PC-3 (cell line): ENCODE measurements at regions of chr2 and their contacts with region 1.

Region 1: DNA sequence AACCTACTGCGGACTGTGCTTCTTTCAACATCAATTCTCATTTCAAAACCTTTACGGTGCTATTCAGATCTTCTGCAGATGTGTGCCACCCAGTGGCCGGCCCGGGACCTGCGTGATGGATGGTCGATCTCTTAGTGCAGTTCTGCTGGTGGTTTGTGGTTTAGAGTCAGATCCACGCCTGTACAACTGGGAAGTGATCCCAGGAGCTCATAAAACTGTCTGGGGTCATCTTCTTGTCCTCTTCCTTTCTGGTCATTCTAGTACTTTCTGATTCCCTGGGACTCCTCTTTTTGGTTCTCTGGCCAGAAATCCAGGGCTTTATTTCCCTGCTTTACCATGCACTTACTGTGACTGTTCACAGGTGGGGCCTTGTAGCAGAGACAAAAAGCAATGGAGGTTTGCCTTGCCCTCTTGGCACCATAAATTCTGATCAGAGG is 15.8 kb upstream of the SELENOI start:
- DNase-seq: peak; percentile 86
- ATAC-seq: peak; percentile 99
- H3K4me3 ChIP-seq: no peak overlapping the region
- H3K27ac ChIP-seq: no peak overlapping the region
- H3K4me1 ChIP-seq: no peaks in the 10 kb centered on the region; the same call in 1 of the 2 replicates
- H3K27me3 ChIP-seq: no peaks in the 10 kb centered on the region
- CTCF ChIP-seq: peak; percentile 95

Region 2: DNA sequence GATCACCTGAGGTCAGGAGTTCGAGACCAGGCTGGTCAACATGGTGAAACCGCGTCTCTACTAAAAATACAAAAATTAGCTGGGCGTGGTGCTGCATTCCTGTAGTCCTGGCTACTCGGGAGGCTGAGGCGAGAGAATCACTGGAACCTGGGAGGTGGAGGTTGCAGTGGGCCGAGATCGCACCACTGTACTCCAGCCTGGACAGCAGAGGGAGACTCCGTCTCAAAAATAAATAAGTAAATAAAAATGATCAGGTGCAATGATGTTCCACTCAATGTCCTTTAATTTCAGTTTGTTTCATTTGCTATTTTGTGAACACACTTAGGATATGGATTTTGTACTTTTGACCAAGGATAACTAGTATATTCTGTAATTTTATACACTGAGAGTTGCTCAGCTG is 95.0 kb before region 1 on chr2:
- CTCF ChIA-PET with region 1: interaction called, 3 read pairs
- POLR2A ChIA-PET with region 1: no interaction called
- intact Hi-C with region 1: loop called (anchors 1 kb)
- DNase-seq: peak; percentile 14
- ATAC-seq: no peak
- H3K4me3 ChIP-seq: no peak overlapping the region
- H3K27ac ChIP-seq: no peak overlapping the region
- H3K4me1 ChIP-seq: no peaks in the 10 kb centered on the region
- H3K27me3 ChIP-seq: no peaks in the 10 kb centered on the region
- CTCF ChIP-seq: peak; percentile 46

Region 3: DNA sequence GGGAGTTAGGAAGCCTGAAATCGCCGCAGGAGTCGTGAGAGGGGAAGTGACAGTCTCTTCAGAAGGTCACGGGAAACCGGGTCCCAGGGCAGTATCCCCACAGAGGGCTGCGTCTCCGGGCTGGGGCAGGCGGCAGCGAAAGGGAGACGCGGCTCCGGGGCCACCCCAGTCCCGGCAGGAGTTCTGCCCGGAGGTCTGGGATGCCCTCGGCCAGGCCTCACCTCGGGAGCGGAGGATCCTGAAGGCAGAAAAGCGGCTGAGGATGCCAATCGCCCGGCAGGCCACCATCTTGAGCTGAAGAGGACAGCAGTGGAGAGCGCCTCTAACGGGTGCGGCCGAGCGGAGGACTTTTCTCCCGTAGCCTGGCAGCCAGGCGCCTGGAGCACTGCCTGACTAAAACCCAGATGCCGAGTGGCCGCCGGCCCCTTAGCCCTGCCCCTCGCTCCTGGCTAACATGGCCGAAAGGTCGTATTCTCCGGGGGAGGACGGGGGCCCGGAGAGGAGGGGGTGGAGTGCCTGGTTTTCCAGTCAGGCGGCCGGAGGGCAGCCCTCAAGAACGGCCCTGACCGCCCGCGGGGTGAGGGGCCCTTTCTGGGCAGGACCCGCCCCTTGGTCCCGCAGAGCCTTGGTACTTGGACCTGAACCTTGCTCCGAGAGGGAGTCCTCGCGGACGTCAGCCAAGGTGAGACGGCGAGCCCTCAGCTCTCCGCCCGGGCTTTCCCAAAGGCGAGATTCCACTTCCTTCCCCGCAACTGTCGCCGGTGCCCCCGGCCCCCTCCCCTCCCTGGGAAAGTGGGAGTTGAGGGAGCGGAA is 85.6 kb before region 1 on chr2 and contains the starts of genes HADHA and HADHB:
- CTCF ChIA-PET with region 1: no interaction called
- POLR2A ChIA-PET with region 1: no interaction called
- intact Hi-C with region 1: loop called (anchors 1 kb)
- DNase-seq: peak; percentile 86
- ATAC-seq: peak; percentile 80
- H3K4me3 ChIP-seq: peak within 1 kb of the TSS; percentile 89
- H3K27ac ChIP-seq: peak within 1 kb of the TSS; percentile 85
- H3K4me1 ChIP-seq: peaks cover 27% of the 10 kb centered on the region
- H3K27me3 ChIP-seq: no peaks in the 10 kb centered on the region
- CTCF ChIP-seq: 0 out of 2 replicates have a peak, but pooled peaks have one; percentile 14
- total RNA-seq, gene HADHA: 128 and 131 TPM in 2 replicates
- total RNA-seq, gene HADHB: 58.3 and 72.3 TPM in 2 replicates

Region 4: GRCh38 chr2:26345545-26346453 is 15.7 kb after region 1 on chr2 and contains the start of gene SELENOI:
- CTCF ChIA-PET with region 1: interaction called, 9 read pairs
- POLR2A ChIA-PET with region 1: interaction called, 12 read pairs
- intact Hi-C with region 1: no loop called
- DNase-seq: peak; percentile 99
- ATAC-seq: peak; percentile 93
- H3K4me3 ChIP-seq: peak within 1 kb of the TSS; percentile 91
- H3K27ac ChIP-seq: peak within 1 kb of the TSS; percentile 82
- H3K4me1 ChIP-seq: peaks cover 44% of the 10 kb centered on the region
- H3K27me3 ChIP-seq: no peaks in the 10 kb centered on the region
- CTCF ChIP-seq: no peak
- total RNA-seq, gene SELENOI: 22.0 and 22.3 TPM in 2 replicates

Region 5: DNA sequence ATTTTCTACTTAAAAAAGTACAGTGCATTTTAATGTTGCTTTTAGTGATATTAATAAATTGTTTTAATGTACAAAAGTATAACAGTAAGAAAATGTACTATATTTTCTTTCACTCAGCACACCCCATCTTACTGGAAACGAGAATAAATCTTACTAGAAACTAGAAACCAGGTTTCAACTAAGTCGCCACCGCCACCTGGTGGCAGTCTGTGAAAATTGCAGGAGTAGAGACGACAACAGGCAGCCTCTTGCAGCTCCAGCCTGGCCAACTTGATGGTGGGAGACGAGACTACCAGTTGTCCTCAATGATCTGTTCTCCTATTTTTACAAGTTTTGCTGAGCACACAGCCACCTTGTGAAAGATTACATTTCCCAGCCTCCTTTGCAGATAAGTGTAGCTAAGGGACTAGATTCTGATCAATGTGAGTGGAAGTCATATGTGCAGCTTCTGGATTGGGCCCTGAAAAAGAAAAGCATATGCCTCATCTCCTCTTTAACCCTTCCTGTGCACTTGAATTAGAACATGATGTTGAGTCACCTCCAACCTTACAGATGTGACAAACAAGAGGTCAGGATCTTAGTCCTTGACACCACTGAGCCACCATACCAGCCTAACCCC is 139.1 kb after region 1 on chr2:
- CTCF ChIA-PET with region 1: no interaction called
- POLR2A ChIA-PET with region 1: no interaction called
- intact Hi-C with region 1: loop called (anchors 1 kb)
- DNase-seq: peak; percentile 91
- ATAC-seq: peak; percentile 76
- H3K4me3 ChIP-seq: no peak overlapping the region
- H3K27ac ChIP-seq: no peak overlapping the region
- H3K4me1 ChIP-seq: no peaks in the 10 kb centered on the region
- H3K27me3 ChIP-seq: no peaks in the 10 kb centered on the region
- CTCF ChIP-seq: peak; percentile 91

Region 6: DNA sequence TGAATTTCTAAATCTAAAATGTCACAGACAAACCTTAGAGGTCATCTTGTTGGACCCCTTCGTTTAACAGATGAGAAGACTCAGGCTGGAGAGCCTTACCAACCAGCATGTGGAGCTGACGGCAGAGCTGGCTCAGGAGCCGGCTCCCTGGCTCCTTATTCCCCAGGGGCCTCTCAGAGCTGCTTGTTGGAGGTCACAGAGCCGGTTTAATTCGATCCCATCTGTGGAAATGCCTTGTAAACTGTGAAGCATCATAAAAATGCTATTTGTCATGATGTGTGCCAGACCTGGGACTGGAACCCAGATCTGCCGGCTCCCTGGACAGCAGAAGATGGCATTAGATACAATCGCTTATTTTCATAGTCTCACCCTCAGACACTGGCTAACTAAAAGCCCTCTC is 319.2 kb after region 1 on chr2:
- CTCF ChIA-PET with region 1: no interaction called
- POLR2A ChIA-PET with region 1: no interaction called
- intact Hi-C with region 1: no loop called
- DNase-seq: no peak
- ATAC-seq: no peak
- H3K4me3 ChIP-seq: no peak overlapping the region
- H3K27ac ChIP-seq: no peak overlapping the region
- H3K4me1 ChIP-seq: no peaks in the 10 kb centered on the region
- H3K27me3 ChIP-seq: peaks cover 53% of the 10 kb centered on the region
- CTCF ChIP-seq: no peak